B cell (primary cell): ENCODE measurements at regions of chr7 and their contacts with region 1.

Region 1: DNA sequence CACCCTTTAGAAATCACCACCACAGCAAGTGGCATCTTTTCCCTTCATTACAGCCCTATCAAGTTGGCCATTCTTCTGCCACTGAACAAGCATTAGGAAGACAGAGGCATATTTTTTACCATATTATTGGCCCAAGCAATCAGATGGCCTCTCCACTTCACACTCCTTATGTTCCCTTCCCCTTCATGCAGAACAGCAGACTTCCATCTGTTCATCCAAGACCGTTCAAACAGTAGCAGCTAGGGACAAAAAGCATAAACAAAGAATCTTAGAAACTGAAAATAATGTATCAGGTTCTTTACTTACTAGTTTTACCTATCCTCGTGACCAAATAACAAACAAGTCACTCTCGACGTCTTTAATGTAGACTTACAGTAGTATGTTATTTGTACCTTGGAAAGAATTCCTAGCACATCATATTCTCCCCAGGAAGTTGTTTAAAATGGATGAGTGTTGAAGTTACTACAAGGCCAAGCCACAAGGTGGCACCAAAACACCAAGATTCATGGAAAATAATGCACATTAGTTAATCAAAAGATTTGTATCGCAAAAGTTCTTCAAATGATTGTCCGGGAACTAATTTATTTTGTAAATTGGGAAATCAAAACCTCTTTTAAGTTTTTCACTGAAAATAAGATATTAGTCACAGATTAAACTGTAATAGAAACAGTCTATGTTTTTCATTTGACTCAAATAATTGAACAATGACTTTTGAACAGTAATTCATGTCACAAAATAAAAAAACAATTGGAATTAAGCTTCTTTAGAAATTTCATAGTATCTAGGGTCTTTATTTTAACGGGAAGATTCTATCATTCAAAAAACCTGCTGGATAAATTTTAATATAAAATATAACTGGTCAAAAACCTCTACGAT is 112.1 kb downstream of the VPS41 start:
- DNase-seq: peak; percentile 67
- ATAC-seq: no peak
- H3K4me3 ChIP-seq: no peak overlapping the region
- H3K4me3 Mint-ChIP-seq: no peak overlapping the region
- H3K27ac ChIP-seq: no peak overlapping the region
- H3K27ac Mint-ChIP-seq: no peak overlapping the region
- H3K4me1 ChIP-seq: no peaks in the 10 kb centered on the region
- H3K4me1 Mint-ChIP-seq: no peaks in the 10 kb centered on the region
- H3K27me3 ChIP-seq: no peaks in the 10 kb centered on the region
- H3K27me3 Mint-ChIP-seq: no peaks in the 10 kb centered on the region
- CTCF ChIP-seq: peak; percentile 96

Region 2: DNA sequence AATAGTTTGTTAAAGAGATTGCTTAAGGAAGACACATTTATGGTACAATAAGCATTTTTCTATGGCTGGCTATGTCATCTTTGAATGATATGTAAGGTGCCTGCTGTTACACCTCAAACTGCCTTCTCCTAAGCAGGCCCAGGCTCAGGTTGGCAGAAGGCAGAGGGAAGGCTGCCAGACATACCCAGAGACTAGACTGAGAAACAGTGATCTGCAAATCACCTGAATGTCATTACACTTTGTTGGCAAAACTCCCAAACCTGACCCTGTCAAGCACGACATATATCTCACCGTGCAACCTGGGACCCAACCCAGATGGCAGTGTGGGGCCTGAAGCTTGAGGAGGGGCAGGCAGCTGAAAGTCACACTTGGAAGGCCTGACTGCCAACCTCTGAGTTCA is 386.8 kb before region 1 on chr7:
- CTCF ChIA-PET with region 1: no interaction called
- POLR2A ChIA-PET with region 1: no interaction called
- intact Hi-C with region 1: no loop called
- DNase-seq: no peak
- ATAC-seq: no peak
- H3K4me3 ChIP-seq: no peak overlapping the region
- H3K4me3 Mint-ChIP-seq: no peak overlapping the region
- H3K27ac ChIP-seq: no peak overlapping the region
- H3K27ac Mint-ChIP-seq: no peak overlapping the region
- H3K4me1 ChIP-seq: peaks cover 37 to 39% of the 10 kb centered on the region in 2 donors
- H3K4me1 Mint-ChIP-seq: peaks cover 40% of the 10 kb centered on the region
- H3K27me3 ChIP-seq: no peaks in the 10 kb centered on the region
- H3K27me3 Mint-ChIP-seq: no peaks in the 10 kb centered on the region
- CTCF ChIP-seq: no peak

Region 3: DNA sequence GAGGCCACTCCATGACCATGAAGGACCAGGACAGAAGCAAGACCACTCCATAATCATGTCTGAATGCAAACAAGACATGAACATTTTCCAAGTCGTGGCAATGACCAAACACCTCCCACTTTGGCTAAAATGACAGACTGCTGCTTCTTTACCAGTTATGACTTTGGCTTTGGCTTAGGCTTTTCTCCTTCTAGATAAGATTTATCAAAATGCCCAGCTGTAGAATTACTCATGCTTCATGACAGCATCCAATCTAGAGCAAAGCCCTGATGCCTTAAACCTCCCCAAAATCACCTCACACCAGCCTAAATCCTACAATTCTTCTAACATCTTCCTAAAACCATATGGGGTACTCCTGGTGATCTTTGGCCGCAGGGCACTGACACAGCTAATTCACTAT is 10.0 kb after region 1 on chr7:
- CTCF ChIA-PET with region 1: interaction called, 13 read pairs
- POLR2A ChIA-PET with region 1: no interaction called
- intact Hi-C with region 1: no loop called
- DNase-seq: no peak
- ATAC-seq: no peak
- H3K4me3 ChIP-seq: no peak overlapping the region
- H3K4me3 Mint-ChIP-seq: no peak overlapping the region
- H3K27ac ChIP-seq: no peak overlapping the region
- H3K27ac Mint-ChIP-seq: no peak overlapping the region
- H3K4me1 ChIP-seq: no peaks in the 10 kb centered on the region
- H3K4me1 Mint-ChIP-seq: no peaks in the 10 kb centered on the region
- H3K27me3 ChIP-seq: no peaks in the 10 kb centered on the region
- H3K27me3 Mint-ChIP-seq: no peaks in the 10 kb centered on the region
- CTCF ChIP-seq: no peak

Region 4: GRCh38 chr7:39465055-39465929 is 668.4 kb after region 1 on chr7:
- CTCF ChIA-PET with region 1: interaction called, 19 read pairs
- POLR2A ChIA-PET with region 1: no interaction called
- intact Hi-C with region 1: loop called (anchors 1 kb)
- DNase-seq: peak; percentile 51
- ATAC-seq: no peak
- H3K4me3 ChIP-seq: no peak overlapping the region
- H3K4me3 Mint-ChIP-seq: no peak overlapping the region
- H3K27ac ChIP-seq: no peak overlapping the region
- H3K27ac Mint-ChIP-seq: no peak overlapping the region
- H3K4me1 ChIP-seq: peaks cover 3 to 6% of the 10 kb centered on the region in 2 donors
- H3K4me1 Mint-ChIP-seq: peaks cover 4% of the 10 kb centered on the region
- H3K27me3 ChIP-seq: peaks cover 0 to 3% (median 0%) of the 10 kb centered on the region in 4 experiments
- H3K27me3 Mint-ChIP-seq: peaks cover 14% of the 10 kb centered on the region
- CTCF ChIP-seq: peak; percentile 77

Region 5: DNA sequence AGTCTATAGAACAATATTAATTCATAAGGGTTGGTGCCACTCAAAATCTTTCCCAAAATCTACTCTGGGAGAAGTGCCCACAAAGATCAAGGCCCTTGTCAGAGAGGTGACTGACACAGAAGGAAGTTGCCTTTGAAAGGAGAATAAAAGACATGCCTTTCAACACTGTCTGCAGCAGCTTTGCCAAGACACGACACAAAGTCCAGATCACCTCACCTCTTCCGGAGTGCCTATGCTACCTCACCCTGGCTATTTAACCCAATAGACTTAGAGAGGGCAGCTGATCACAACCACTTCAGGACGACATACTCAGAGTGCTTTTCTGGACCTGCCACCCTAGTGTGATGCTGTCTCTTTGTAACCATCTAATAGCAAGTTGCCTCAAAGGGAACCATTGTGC is 720.4 kb after region 1 on chr7:
- CTCF ChIA-PET with region 1: interaction called, 10 read pairs
- POLR2A ChIA-PET with region 1: no interaction called
- intact Hi-C with region 1: loop called (anchors 1 kb)
- DNase-seq: no peak
- ATAC-seq: no peak
- H3K4me3 ChIP-seq: no peak overlapping the region
- H3K4me3 Mint-ChIP-seq: no peak overlapping the region
- H3K27ac ChIP-seq: no peak overlapping the region
- H3K27ac Mint-ChIP-seq: no peak overlapping the region
- H3K4me1 ChIP-seq: peaks cover 0 to 4% of the 10 kb centered on the region in 2 donors
- H3K4me1 Mint-ChIP-seq: peaks cover 3% of the 10 kb centered on the region
- H3K27me3 ChIP-seq: no peaks in the 10 kb centered on the region
- H3K27me3 Mint-ChIP-seq: peaks cover 11% of the 10 kb centered on the region
- CTCF ChIP-seq: no peak

Region 6: DNA sequence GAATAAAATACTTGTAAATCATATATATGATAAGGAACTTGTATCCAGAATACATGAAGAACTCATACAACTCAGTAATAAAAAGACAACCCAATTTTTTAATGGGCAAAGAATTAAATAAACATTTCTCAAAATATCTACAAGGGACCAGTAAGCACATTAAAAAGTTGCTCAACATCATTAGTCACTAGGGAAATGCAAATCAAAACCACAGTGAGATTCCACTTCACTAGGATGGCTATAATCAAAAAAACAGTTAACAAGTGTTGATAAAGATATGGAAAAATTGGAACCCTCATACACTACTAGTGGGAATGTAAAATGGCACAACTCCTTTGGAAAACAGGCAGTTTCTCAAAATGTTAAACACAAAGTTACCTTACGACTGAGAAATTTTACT is 729.1 kb after region 1 on chr7:
- CTCF ChIA-PET with region 1: interaction called, 10 read pairs
- POLR2A ChIA-PET with region 1: no interaction called
- intact Hi-C with region 1: no loop called
- DNase-seq: no peak
- ATAC-seq: no peak
- H3K4me3 ChIP-seq: no peak overlapping the region
- H3K4me3 Mint-ChIP-seq: no peak overlapping the region
- H3K27ac ChIP-seq: no peak overlapping the region
- H3K27ac Mint-ChIP-seq: no peak overlapping the region
- H3K4me1 ChIP-seq: no peaks in the 10 kb centered on the region
- H3K4me1 Mint-ChIP-seq: no peaks in the 10 kb centered on the region
- H3K27me3 ChIP-seq: no peaks in the 10 kb centered on the region
- H3K27me3 Mint-ChIP-seq: peaks cover 20% of the 10 kb centered on the region
- CTCF ChIP-seq: no peak